ENCODE measurements at regions of chr20 and their contacts with region 1.

Region 1: DNA sequence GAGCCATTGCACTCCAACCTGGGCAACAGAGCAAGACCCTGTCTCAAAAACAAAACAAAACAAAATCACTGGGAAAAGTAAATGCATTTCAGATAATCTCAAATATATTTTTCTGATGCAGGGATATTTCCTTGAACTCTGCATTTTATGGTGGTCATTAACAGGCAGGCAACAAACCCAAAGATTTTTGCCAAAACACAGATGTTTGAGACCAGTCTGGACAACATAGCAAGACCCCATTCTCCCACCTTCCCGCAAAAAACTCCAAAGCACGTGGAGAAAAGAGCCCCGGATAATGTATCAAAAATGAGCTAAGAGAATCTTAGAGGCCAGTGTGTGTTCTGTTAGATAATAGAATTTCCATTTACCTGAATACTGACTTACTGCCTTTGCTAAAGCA is 44.3 kb downstream of the SLC9A8 start:
- DNase-seq: no peak
- H3K4me3 Mint-ChIP-seq: no peak overlapping the region
- H3K27ac Mint-ChIP-seq: no peak overlapping the region
- H3K4me1 Mint-ChIP-seq: no peaks in the 10 kb centered on the region
- H3K27me3 Mint-ChIP-seq: no peaks in the 10 kb centered on the region

Region 2: GRCh38 chr20:49846206-49846807 is 10.6 kb before region 1 on chr20:
- CTCF ChIA-PET with region 1: interaction called, 15 read pairs
- POLR2A ChIA-PET with region 1: no interaction called
- intact Hi-C with region 1: no loop called
- DNase-seq: peak; percentile 50
- H3K4me3 Mint-ChIP-seq: no peak overlapping the region
- H3K27ac Mint-ChIP-seq: no peak overlapping the region
- H3K4me1 Mint-ChIP-seq: no peaks in the 10 kb centered on the region
- H3K27me3 Mint-ChIP-seq: no peaks in the 10 kb centered on the region

Region 3: GRCh38 chr20:50095476-50096078 is 238.7 kb after region 1 on chr20:
- CTCF ChIA-PET with region 1: no interaction called
- POLR2A ChIA-PET with region 1: no interaction called
- intact Hi-C with region 1: no loop called
- DNase-seq: no peak
- H3K4me3 Mint-ChIP-seq: no peak overlapping the region
- H3K27ac Mint-ChIP-seq: peak overlapping the region; percentile 49
- H3K4me1 Mint-ChIP-seq: peaks cover 32% of the 10 kb centered on the region
- H3K27me3 Mint-ChIP-seq: no peaks in the 10 kb centered on the region

Measured in activated CD4-positive, alpha-beta memory T cell treated with anti-CD3 and anti-CD28 coated beads for 36 hours (primary cell).